ENCODE measurements at regions of chr22 and their contacts with region 1.

Region 1: GRCh38 chr22:38403812-38404211 is 51.2 kb downstream of the KCNJ4 start:
- DNase-seq: no peak
- H3K4me3 ChIP-seq: no peak overlapping the region
- H3K4me1 ChIP-seq: peaks cover 8% of the 10 kb centered on the region
- H3K27me3 ChIP-seq: no peaks in the 10 kb centered on the region

Region 2: DNA sequence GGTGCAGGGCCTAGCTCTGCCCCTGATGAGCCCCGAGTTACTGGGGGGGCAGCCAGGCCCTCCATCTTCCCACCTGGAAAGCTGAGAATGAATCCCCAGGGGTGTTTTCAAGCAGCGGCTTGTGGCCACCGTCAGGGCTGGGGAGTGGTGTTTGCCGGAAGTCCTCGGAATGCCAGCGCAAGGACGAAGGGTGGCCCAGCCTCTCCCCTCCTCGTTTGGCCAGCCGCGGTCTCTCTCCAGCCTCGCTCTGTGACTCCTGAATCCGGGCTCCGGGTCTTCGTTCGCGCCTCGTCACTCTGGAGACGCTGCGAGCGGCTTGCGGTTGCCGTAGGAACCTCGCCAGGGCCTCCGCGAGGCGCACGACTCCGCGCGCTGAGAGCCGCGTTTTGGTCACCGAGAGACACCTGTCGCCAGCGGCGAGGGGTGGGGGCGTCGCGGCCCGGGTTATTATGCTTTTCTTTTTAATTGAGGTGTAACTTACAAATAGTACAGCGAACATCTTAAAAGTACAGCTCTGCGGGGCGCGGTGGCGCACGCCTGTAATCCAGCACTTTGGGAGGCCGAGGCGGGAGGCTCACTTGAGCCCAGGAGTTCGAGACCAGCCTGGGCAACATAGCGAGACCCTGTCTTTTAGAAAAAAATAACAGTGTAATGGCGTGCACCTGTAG is 57.7 kb after region 1 on chr22:
- in situ Hi-C with region 1: loop called (anchors 10 kb)
- DNase-seq: peak; percentile 81 to 96
- H3K4me3 ChIP-seq: peak overlapping the region; percentile 11
- H3K4me1 ChIP-seq: peaks cover 12% of the 10 kb centered on the region
- H3K27me3 ChIP-seq: no peaks in the 10 kb centered on the region

Measured in HAP-1 (cell line).